WTC11 (cell line): ENCODE measurements at regions of chr9 and their contacts with region 1.

Region 1: GRCh38 chr9:136949817-136950655 is 2.0 kb upstream of the LCN12 start:
- DNase-seq: peak; percentile 97
- ATAC-seq: peak; percentile 81
- H3K4me3 Mint-ChIP-seq: peak overlapping the region; percentile 72
- H3K27ac Mint-ChIP-seq: no peak overlapping the region
- H3K4me1 Mint-ChIP-seq: peaks cover 7% of the 10 kb centered on the region
- H3K27me3 Mint-ChIP-seq: no peaks in the 10 kb centered on the region
- CTCF ChIP-seq: no peak

Region 2: DNA sequence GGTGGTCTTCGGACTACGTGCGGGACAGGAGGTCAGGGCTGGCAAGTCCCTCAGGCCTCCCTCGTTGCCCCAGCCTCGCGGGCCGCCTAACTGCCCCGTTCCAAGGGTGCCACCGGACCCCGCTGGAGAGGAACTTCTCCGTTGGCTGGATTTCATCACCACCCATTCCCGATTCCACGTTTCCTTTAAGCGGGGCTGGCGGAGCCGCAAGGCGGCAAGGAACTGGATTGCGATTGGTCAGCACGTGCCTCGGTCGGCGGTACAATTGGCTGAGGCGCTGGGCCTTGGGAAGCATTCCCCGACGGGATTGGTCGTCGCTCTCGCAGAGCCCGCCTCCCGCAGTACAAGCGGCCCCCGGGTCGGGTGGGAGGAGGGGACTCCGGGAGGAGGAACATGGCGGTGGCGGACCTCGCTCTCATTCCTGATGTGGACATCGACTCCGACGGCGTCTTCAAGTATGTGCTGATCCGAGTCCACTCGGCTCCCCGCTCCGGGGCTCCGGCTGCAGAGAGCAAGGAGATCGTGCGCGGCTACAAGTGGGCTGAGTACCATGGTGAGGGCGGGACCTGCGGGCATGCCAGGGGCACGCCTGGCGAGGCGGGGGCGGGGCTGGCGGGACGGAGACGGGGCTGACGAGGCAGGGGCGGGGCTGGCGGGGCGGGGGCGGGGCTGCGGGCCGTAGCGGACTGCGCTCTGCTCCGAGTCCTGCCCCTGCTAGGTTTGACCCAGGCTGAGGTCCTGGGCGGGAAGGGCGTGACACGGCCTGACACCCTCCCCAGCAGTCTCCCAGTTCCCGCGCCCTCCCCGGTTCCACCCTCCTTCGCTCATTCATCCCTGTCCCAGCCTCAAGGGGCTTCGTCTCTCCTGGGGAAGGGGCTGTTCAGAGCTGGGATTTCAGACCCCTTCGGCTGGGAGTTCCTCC is 100.7 kb before region 1 on chr9 and contains the start of gene PHPT1:
- CTCF ChIA-PET with region 1: interaction called, 14 read pairs
- POLR2A ChIA-PET with region 1: no interaction called
- DNase-seq: peak; percentile 99
- ATAC-seq: peak; percentile 75
- H3K4me3 Mint-ChIP-seq: peak within 1 kb of the TSS; percentile 94
- H3K27ac Mint-ChIP-seq: peak within 1 kb of the TSS; percentile 94
- H3K4me1 Mint-ChIP-seq: peaks cover 4% of the 10 kb centered on the region
- H3K27me3 Mint-ChIP-seq: peaks cover 3% of the 10 kb centered on the region
- CTCF ChIP-seq: no peak
- total RNA-seq, gene PHPT1: 138 to 176 TPM (median 173 TPM) in 3 replicates

Region 3: DNA sequence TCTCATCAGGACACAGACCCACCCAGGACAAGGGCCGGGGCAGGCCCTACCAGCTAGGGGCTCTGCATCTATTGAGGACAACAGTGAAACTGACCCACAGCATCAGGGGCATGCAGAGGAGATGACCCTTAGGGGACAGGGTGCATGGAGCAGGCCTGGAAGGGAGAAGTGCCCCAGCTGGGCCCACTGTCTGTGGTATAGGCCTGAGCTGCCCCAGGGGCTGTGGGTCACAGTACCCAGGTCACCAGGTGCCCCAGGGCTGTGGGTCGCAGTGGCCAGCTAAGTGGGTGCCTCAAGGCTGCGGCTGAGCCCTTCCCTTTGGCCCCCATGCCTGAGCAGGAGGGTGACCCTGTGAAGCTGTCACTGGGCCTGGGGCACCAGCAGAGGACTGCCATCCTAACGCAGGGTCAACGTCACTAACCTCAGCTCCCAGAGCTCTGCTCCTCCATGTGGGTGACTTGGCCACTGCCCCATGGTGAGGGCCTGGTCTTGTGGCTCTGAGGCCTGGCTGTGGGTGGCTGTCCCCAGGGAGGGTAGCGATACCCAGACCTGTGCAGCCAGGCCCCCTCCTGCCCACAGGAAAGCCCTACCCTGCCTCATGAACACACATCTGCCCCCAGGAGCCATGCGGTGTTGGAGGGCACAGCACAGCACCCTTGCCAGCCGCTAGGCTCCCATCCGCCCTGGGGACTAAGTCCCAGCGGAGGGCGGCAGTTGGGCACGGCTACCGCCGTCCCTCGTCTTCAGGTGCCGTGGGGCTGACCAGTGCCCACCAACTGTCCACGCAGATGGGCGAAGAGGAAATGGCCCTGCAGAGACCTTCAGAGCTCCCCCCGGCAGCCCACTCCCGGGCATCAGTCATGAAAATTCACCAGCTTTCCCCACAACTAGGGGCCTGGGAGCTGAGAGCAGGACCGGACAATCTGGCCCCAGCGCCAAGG is 88.8 kb before region 1 on chr9:
- CTCF ChIA-PET with region 1: no interaction called
- POLR2A ChIA-PET with region 1: no interaction called
- DNase-seq: no peak
- ATAC-seq: no peak
- H3K4me3 Mint-ChIP-seq: no peak overlapping the region
- H3K27ac Mint-ChIP-seq: no peak overlapping the region
- H3K4me1 Mint-ChIP-seq: peaks cover 4% of the 10 kb centered on the region
- H3K27me3 Mint-ChIP-seq: no peaks in the 10 kb centered on the region
- CTCF ChIP-seq: no peak

Region 4: GRCh38 chr9:136960212-136960937 is 10.3 kb after region 1 on chr9:
- CTCF ChIA-PET with region 1: interaction called, 17 read pairs
- POLR2A ChIA-PET with region 1: no interaction called
- DNase-seq: no peak
- ATAC-seq: no peak
- H3K4me3 Mint-ChIP-seq: no peak overlapping the region
- H3K27ac Mint-ChIP-seq: no peak overlapping the region
- H3K4me1 Mint-ChIP-seq: no peaks in the 10 kb centered on the region
- H3K27me3 Mint-ChIP-seq: no peaks in the 10 kb centered on the region
- CTCF ChIP-seq: no peak

Region 5: GRCh38 chr9:136978073-136978864 is 28.2 kb after region 1 on chr9:
- CTCF ChIA-PET with region 1: interaction called, 45 read pairs
- POLR2A ChIA-PET with region 1: no interaction called
- DNase-seq: peak; percentile 96
- ATAC-seq: peak; percentile 76
- H3K4me3 Mint-ChIP-seq: peak overlapping the region; percentile 66
- H3K27ac Mint-ChIP-seq: no peak overlapping the region
- H3K4me1 Mint-ChIP-seq: peaks cover 3% of the 10 kb centered on the region; the same call in 1 of the 2 replicates
- H3K27me3 Mint-ChIP-seq: peaks cover 3% of the 10 kb centered on the region; the same call in 1 of the 2 replicates
- CTCF ChIP-seq: no peak

Region 6: DNA sequence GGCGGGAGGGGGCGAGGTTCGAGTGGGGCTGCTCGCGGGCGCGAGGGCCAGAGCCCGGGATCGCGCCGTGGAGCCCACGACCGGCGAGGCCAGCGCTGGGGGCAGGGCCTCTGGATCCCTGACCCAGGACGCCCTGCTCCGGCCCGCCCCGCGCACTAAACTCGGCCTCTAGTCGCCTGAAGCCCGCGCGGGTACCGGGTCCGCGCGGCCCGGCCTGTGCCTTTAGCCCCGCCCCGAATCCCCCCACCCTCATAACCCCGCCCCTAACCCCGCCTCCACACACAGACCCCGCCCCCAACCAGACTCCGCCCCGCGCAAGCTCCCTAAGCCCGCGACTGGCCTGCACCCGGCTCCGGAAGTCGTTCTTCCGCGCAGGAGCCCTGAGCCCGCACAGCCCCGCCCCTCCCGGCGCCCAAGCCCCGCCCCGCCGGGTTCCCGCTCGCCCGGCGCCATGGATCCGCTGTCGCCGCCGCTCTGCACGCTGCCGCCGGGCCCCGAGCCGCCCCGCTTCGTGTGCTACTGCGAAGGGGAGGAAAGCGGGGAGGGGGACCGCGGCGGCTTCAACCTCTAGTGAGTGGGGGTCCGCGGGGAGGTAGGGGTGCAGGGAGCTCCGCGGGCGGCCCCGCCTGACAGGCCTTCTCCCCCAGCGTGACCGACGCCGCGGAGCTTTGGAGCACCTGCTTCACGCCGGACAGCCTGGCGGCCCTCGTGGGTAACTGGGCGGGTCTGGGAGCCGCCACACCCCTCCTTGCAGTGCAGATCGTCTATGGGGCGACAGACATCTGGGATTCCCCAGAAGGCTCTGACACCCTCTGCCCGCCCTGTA is 42.2 kb after region 1 on chr9 and contains the start of gene PAXX:
- CTCF ChIA-PET with region 1: interaction called, 25 read pairs
- POLR2A ChIA-PET with region 1: no interaction called
- DNase-seq: peak; percentile 93
- ATAC-seq: peak; percentile 90
- H3K4me3 Mint-ChIP-seq: peak within 1 kb of the TSS; percentile 72
- H3K27ac Mint-ChIP-seq: no peak within 1 kb of the TSS
- H3K4me1 Mint-ChIP-seq: no peaks in the 10 kb centered on the region; the same call in 1 of the 2 replicates
- H3K27me3 Mint-ChIP-seq: peaks cover 34% of the 10 kb centered on the region
- CTCF ChIP-seq: no peak
- total RNA-seq, gene PAXX: 44.1 to 45.3 TPM (median 44.6 TPM) in 3 replicates

Region 7: GRCh38 chr9:137064027-137064879 is 114.2 kb after region 1 on chr9:
- CTCF ChIA-PET with region 1: interaction called, 23 read pairs
- POLR2A ChIA-PET with region 1: no interaction called
- DNase-seq: peak; percentile 84
- ATAC-seq: peak; percentile 51
- H3K4me3 Mint-ChIP-seq: no peak overlapping the region
- H3K27ac Mint-ChIP-seq: no peak overlapping the region
- H3K4me1 Mint-ChIP-seq: peaks cover 12% of the 10 kb centered on the region
- H3K27me3 Mint-ChIP-seq: peaks cover 6% of the 10 kb centered on the region
- CTCF ChIP-seq: peak; percentile 99